AG04450 (cell line): ENCODE measurements at regions of chr11 and their contacts with region 1.

Region 1: GRCh38 chr11:119334174-119334930 is at the start of gene RNF26:
- DNase-seq: peak; percentile 93
- H3K4me3 ChIP-seq: peak within 1 kb of the TSS; percentile 94
- H3K27ac ChIP-seq: peak within 1 kb of the TSS; percentile 57
- H3K27me3 ChIP-seq: no peaks in the 10 kb centered on the region
- CTCF ChIP-seq: no peak
- polyA plus RNA-seq, gene RNF26: 27.1 and 35.3 TPM in 2 replicates

Region 2: DNA sequence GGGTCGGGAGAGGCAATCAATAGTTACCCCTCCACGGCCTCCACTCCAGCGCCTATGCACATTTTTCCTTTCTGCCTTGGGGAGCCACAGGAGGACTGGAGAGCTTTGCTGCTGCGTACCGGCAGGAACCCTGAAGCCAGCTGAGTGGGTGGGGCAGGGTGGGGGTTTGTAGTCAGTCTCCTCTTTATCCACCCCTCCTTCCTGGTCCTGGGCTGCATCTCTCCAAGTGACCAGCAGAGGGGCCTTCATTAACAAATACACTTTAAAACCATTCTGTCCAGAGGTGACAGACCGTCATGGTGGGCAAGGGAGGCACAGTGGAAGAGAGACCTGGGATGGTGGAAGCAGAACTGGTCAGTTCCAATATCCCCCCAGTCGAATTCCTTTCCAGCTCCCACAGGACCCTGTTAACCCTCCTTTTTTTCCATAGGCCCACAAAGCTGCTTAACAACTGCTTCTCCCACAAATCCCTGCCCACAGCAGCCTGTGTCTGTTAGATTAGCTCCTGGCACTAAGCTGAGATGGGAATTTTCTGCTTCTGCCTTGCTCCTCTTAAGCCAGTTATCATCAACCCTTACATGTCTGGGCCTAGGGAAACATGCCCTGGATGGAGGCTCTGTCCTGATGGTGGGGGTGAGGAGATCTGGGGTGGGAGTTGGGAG is 189.4 kb before region 1 on chr11:
- CTCF ChIA-PET with region 1: interaction called, 12 read pairs
- POLR2A ChIA-PET with region 1: no interaction called
- DNase-seq: peak; percentile 32
- H3K4me3 ChIP-seq: no peak overlapping the region
- H3K27ac ChIP-seq: no peak overlapping the region
- H3K27me3 ChIP-seq: peaks cover 26% of the 10 kb centered on the region
- CTCF ChIP-seq: peak; percentile 72

Region 3: DNA sequence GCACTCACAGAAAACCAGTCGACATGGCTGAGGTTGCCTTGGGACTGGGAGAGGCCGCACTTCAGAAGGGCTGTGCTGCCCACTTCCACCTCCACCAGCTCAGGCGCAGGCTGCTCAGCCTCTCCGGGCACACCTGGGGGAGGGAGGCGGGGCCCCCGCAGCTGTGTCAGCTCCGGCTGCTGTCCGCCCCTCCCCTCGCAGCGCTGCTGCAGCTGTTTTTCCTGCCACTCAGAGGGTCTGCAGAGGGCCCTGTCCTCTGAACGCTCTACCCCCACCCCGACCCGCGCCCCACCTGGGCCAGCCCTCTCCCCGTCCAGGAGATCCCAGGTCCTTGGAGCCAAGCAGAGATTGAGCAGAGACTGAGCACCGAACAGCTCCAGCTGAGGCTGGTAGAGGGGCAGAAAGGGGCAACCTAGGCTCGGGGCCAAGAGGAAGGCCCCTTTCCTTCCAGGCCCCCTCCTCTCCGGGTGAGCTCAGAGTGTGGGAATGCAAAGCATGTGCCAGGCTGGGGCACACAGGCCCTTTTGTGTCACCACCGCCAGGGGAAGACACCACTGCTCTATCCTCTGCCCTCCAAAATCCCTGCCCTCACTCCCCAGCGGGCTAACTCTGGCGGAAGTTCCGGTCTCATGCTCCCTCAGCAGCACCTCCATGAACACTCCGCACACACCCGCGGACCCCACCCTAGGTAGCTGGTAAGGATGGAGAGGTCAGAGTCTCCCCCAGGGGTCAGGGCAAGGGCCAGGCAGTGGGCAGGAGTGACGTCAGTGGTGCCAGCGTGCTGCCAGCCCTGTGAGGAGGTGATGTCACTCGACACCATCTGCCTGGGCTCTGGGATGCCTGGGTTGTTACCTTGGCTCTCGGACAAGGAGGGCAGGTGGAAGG is 19.0 kb before region 1 on chr11:
- CTCF ChIA-PET with region 1: interaction called, 161 read pairs
- POLR2A ChIA-PET with region 1: interaction called, 34 read pairs
- DNase-seq: no peak
- H3K4me3 ChIP-seq: peak overlapping the region; percentile 71
- H3K27ac ChIP-seq: no peak overlapping the region
- H3K27me3 ChIP-seq: no peaks in the 10 kb centered on the region
- CTCF ChIP-seq: no peak

Region 4: DNA sequence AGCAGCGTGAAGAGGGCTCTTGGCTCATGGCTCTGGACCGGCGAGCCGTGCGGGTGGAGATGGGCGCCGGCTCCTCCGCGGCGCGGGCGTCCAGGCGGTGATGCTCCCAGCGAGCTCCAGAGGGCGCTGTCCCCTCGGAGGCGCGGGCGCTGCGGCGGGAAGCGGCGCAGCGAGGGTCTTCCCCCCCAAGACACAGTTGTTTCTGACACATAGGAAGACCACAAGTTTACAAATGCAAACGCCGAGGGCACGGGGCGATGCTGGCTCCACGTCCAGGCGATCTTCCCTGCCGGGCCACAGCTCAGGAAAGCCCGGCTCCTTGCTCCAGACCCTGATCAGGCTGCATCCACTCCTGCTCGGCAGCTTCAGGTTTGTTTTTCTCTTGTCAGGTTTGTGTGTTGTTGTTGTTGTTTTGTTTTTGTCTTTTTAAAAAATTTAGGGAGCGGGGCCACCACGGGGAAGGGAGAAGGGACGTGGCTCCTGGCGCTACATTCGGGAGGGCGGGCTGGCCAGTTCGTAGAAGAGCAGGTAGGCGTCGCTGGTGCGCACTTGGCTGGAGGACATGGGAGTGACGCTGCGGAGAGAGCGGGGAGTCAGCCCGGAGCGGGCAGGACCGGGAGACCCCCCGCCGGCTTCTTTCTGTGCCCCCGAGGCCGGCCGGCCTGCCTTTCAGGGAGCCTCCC is 22.1 kb after region 1 on chr11:
- CTCF ChIA-PET with region 1: interaction called, 80 read pairs
- POLR2A ChIA-PET with region 1: interaction called, 6 read pairs
- DNase-seq: no peak
- H3K4me3 ChIP-seq: peak overlapping the region; percentile 66
- H3K27ac ChIP-seq: no peak overlapping the region
- H3K27me3 ChIP-seq: peaks cover 20% of the 10 kb centered on the region
- CTCF ChIP-seq: peak; percentile 80

Region 5: GRCh38 chr11:119381181-119381988 is 47.0 kb after region 1 on chr11 and contains the start of gene USP2:
- CTCF ChIA-PET with region 1: interaction called, 74 read pairs
- POLR2A ChIA-PET with region 1: interaction called, 12 read pairs
- DNase-seq: peak; percentile 88
- H3K4me3 ChIP-seq: peak within 1 kb of the TSS; percentile 68
- H3K27ac ChIP-seq: peak within 1 kb of the TSS; percentile 21
- H3K27me3 ChIP-seq: peaks cover 17% of the 10 kb centered on the region
- CTCF ChIP-seq: peak; percentile 78
- polyA plus RNA-seq, gene USP2: 0.32 and 0.46 TPM in 2 replicates

Region 6: DNA sequence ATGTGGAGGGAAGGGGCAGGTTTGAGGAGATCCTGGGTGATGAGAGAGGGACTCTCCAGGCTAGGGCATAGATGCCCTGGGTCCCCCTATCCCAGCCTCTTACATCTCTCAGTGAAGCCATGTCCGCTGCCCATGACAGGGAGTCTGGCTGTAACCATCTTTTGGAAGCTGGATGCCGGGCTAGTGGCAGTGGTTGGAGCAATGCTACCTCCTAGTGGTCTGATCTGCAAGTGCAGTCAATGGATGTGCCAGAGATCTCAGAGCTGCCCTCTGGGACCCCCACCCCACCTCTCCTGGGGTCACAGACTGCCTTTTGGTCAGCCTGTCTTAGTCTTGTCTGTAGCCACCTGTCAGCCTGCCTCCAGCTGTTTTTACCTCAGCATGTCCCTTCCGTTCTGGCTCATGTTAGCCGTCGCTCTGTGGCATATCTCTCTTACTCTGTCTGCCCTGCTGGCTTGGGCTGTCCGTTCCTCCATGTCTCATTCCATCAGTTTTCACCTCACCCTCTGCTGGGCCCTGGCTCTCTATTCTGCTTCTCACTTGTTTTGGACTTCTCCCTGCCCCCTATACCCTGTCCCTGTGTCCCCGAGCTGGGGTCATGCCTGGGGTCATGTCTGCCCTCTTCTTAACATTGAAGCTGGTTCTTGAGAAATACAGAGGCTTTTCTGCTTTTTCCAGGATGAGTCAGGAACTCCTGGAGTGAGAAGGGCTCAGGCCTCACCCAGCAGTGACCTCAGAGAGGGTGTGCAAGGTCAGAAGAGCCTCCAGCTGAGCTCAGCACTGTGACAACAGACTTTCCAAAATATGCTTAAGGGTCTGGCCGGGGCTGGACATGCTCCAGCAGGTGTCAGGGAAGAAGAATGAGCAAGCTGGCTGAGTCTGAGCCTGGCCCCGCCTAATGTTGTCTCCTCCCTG is 140.6 kb after region 1 on chr11:
- CTCF ChIA-PET with region 1: interaction called, 60 read pairs
- POLR2A ChIA-PET with region 1: interaction called, 11 read pairs
- DNase-seq: no peak
- H3K4me3 ChIP-seq: no peak overlapping the region
- H3K27ac ChIP-seq: peak overlapping the region; percentile 61
- H3K27me3 ChIP-seq: peaks cover 17% of the 10 kb centered on the region
- CTCF ChIP-seq: peak; percentile 97